ENCODE measurements at regions of chr11 and their contacts with region 1.

Region 1: DNA sequence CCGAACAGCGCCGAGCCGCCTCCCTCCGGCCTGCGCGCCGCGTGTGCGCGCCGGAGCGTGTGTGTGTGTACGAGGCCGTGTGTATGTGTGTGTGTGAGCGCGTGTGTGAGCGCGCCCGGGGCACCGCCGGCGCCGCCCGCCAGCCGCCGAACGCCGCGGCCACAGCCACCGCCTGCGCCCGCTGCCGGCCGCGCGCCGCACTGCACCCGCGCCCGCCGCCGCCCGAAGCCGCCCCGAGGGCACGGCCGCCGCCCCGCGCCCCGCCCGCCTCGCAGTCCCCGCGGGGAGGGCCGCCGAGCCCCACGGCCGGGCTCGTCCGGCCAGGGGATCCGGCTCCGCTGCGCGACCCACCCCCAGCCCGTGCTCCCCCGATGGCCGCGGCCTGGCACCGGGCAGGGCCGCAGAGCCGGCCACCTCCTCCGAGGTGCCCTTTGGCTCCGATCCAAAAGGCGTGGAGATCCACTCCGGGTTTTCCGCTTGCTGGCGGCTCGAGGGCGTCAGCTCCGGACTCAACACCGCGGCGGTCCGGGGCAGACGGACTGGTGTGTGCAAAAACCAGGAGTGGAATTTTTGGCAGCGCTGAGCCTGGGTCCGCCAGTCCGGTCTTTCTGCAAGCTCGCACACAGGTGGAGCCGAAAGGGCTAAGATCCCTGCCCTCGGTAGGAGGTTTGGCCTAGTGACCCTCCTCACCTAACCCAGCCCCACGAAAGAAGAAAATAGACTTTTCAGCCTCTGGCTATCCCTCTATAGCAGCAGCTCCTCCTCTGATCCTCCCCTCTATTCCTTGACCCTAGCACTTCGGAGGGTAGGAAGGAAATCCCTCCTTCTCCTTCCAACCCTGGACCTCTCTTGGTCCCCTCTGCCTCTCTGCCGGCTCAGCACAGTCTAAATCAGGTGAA is at the start of gene SYT7:
- DNase-seq: peak; percentile 96
- ATAC-seq: peak; percentile 97
- H3K4me3 ChIP-seq: peak within 1 kb of the TSS; percentile 49
- H3K27ac ChIP-seq: no peak within 1 kb of the TSS
- H3K4me1 ChIP-seq: no peaks in the 10 kb centered on the region
- H3K27me3 ChIP-seq: peaks cover 59% of the 10 kb centered on the region
- CTCF ChIP-seq: peak; percentile 25; the same call in 1 of the 2 replicates
- POLR2A ChIP-seq: no peak
- RAD21 ChIP-seq: no peak; the same call in none of the 2 replicates
- total RNA-seq, gene SYT7: under 0.01 TPM in 1 of 2 replicates, not detected in the other

Region 2: GRCh38 chr11:60775420-60775961 is 805.8 kb before region 1 on chr11:
- CTCF ChIA-PET with region 1: no interaction called
- POLR2A ChIA-PET with region 1: no interaction called
- dilution Hi-C with region 1: no loop called
- in situ Hi-C with region 1: no loop called
- intact Hi-C with region 1: no loop called
- DNase-seq: peak; percentile 86
- ATAC-seq: peak; percentile 97
- H3K4me3 ChIP-seq: no peak overlapping the region
- H3K27ac ChIP-seq: no peak overlapping the region
- H3K4me1 ChIP-seq: no peaks in the 10 kb centered on the region; the same call in 1 of the 2 replicates
- H3K27me3 ChIP-seq: peaks cover 7% of the 10 kb centered on the region
- CTCF ChIP-seq: peak; percentile 93
- POLR2A ChIP-seq: no peak
- RAD21 ChIP-seq: peak; percentile 87

Region 3: GRCh38 chr11:61477727-61478148 is 103.5 kb before region 1 on chr11:
- CTCF ChIA-PET with region 1: no interaction called
- POLR2A ChIA-PET with region 1: no interaction called
- dilution Hi-C with region 1: no loop called
- in situ Hi-C with region 1: no loop called
- intact Hi-C with region 1: loop called (anchors 2 kb)
- DNase-seq: no peak
- ATAC-seq: peak; percentile 75
- H3K4me3 ChIP-seq: no peak overlapping the region
- H3K27ac ChIP-seq: no peak overlapping the region
- H3K4me1 ChIP-seq: no peaks in the 10 kb centered on the region
- H3K27me3 ChIP-seq: peaks cover 15% of the 10 kb centered on the region; the same call in 1 of the 2 replicates
- CTCF ChIP-seq: peak; percentile 79
- POLR2A ChIP-seq: 0 out of 2 replicates have a peak, but pooled peaks have one; percentile 21
- RAD21 ChIP-seq: peak; percentile 84

Region 4: DNA sequence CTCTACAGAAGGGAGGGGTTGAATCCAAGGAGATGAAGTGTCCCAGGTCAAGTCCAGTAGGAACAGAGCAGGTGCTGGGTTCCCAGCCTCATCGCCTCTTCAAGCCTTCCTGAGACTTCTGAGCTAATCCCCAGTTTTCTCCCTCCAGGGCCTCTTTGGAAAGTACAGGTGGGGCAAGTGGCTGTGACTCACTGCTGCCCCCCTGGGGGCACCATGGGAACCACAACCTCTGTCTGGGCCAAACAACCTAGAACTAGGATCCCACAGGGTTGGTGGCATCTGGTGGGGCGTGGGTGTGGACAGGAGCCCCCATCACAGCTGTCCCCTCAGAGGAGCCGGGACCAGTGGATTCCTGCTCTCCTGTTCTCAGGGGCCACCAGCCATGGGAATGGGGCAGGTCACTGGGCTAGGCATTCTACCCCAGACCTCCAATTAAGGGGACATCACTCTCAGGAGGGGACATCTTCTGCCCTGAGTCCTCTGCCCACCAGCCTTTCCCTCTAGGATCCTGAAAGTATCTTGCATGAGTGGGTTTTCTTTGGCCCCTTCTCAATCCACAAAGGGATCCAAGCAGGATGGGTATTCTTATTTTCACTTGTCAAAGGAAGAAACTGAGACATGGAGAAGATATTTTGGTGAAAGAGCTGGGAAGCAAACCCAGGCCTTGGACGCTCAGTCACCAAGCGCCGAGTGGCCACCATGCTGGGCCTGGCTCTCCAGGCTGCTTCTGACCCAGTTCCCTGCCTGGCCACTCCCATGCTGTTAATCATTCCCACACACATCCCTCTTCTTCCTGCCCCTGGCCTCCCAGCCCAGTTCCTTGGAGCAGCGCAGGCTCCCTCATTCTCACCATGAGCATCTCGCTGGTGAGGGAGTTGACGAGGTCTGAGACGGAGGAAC is 48.9 kb before region 1 on chr11:
- CTCF ChIA-PET with region 1: no interaction called
- POLR2A ChIA-PET with region 1: no interaction called
- dilution Hi-C with region 1: no loop called
- in situ Hi-C with region 1: no loop called
- intact Hi-C with region 1: loop called (anchors 5 kb)
- DNase-seq: no peak
- ATAC-seq: no peak
- H3K4me3 ChIP-seq: no peak overlapping the region
- H3K27ac ChIP-seq: no peak overlapping the region
- H3K4me1 ChIP-seq: no peaks in the 10 kb centered on the region
- H3K27me3 ChIP-seq: peaks cover 77% of the 10 kb centered on the region
- CTCF ChIP-seq: peak; percentile 61
- POLR2A ChIP-seq: no peak
- RAD21 ChIP-seq: peak; percentile 51

Region 5: GRCh38 chr11:61639816-61640443 is 58.7 kb after region 1 on chr11:
- CTCF ChIA-PET with region 1: no interaction called
- POLR2A ChIA-PET with region 1: no interaction called
- dilution Hi-C with region 1: no loop called
- in situ Hi-C with region 1: no loop called
- intact Hi-C with region 1: loop called (anchors 2 kb)
- DNase-seq: peak; percentile 31
- ATAC-seq: peak; percentile 59
- H3K4me3 ChIP-seq: no peak overlapping the region
- H3K27ac ChIP-seq: peak overlapping the region; percentile 59; the same call in 1 of the 2 replicates
- H3K4me1 ChIP-seq: peaks cover 7% of the 10 kb centered on the region; the same call in 1 of the 2 replicates
- H3K27me3 ChIP-seq: peaks cover 16% of the 10 kb centered on the region
- CTCF ChIP-seq: no peak
- POLR2A ChIP-seq: no peak
- RAD21 ChIP-seq: no peak

Region 6: DNA sequence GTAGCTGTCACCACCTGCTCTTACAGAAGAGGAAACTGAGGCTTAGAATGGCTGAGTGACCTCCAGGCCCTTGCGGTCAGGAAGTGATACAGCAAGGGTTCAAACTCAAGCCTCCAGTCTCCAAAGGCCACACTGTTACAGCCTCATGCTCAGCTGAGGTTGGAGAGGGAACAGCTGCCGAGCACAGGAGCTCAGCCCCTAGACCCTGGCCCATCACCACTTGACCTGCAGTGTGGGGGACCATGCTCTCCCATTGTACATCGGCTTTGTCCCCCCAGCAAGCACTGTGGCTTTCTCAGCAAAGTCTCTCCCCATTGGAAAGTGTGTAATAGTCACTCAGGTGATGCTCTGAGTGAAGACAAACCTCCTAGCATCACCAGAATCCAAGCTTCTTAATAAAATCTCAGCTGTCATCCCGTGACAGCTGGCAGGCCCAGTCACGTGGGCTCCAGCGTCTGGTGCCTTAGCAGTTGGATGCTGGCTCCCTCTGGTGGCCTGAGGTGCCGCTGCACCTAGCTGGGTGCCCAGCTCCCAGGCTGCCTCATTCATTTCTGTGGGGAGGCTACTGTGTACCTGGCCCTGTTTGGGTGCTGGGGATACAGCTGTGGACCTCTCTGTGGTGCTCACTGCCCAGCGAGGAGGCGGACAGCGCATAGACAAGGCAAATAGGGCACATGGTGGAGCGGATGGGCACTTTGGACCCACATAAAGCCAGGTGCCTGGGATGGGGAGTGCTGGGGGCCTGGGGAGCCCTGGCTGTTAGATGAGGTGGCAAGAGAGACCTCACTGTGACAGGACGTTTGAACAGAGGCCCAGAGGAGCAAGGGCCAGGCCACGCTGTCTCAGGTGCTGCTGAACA is 152.1 kb after region 1 on chr11:
- CTCF ChIA-PET with region 1: no interaction called
- POLR2A ChIA-PET with region 1: no interaction called
- dilution Hi-C with region 1: no loop called
- in situ Hi-C with region 1: no loop called
- intact Hi-C with region 1: loop called (anchors 10 kb)
- DNase-seq: peak; percentile 80
- ATAC-seq: peak; percentile 94
- H3K4me3 ChIP-seq: no peak overlapping the region
- H3K27ac ChIP-seq: no peak overlapping the region
- H3K4me1 ChIP-seq: peaks cover 3% of the 10 kb centered on the region; the same call in 1 of the 2 replicates
- H3K27me3 ChIP-seq: no peaks in the 10 kb centered on the region
- CTCF ChIP-seq: peak; percentile 98
- POLR2A ChIP-seq: no peak
- RAD21 ChIP-seq: peak; percentile 96

Measured in IMR-90 (cell line).